ENCODE measurements at regions of chr1 and their contacts with region 1.

Region 1: GRCh38 chr1:29793101-29793546 is 556.8 kb downstream of the PTPRU start:
- DNase-seq: peak; percentile 85 to 89
- H3K4me3 ChIP-seq: no peak overlapping the region
- H3K27ac ChIP-seq: no peak overlapping the region
- H3K4me1 ChIP-seq: no peaks in the 10 kb centered on the region
- H3K27me3 ChIP-seq: peaks cover 0 to 7% of the 10 kb centered on the region in 2 donors
- CTCF ChIP-seq: peak; percentile 70 to 72

Region 2: GRCh38 chr1:29379443-29380073 is 413.6 kb before region 1 on chr1:
- intact Hi-C with region 1: no loop called
- DNase-seq: no peak
- H3K4me3 ChIP-seq: no peak overlapping the region
- H3K27ac ChIP-seq: no peak overlapping the region
- H3K4me1 ChIP-seq: no peaks in the 10 kb centered on the region
- H3K27me3 ChIP-seq: peaks cover 0 to 22% of the 10 kb centered on the region in 2 donors
- CTCF ChIP-seq: no peak

Region 3: GRCh38 chr1:29590583-29591565 is 202.2 kb before region 1 on chr1:
- intact Hi-C with region 1: no loop called
- DNase-seq: no peak
- H3K4me3 ChIP-seq: no peak overlapping the region
- H3K27ac ChIP-seq: no peak overlapping the region
- H3K4me1 ChIP-seq: no peaks in the 10 kb centered on the region
- H3K27me3 ChIP-seq: peaks cover 0 to 29% of the 10 kb centered on the region in 2 donors
- CTCF ChIP-seq: no peak

Region 4: DNA sequence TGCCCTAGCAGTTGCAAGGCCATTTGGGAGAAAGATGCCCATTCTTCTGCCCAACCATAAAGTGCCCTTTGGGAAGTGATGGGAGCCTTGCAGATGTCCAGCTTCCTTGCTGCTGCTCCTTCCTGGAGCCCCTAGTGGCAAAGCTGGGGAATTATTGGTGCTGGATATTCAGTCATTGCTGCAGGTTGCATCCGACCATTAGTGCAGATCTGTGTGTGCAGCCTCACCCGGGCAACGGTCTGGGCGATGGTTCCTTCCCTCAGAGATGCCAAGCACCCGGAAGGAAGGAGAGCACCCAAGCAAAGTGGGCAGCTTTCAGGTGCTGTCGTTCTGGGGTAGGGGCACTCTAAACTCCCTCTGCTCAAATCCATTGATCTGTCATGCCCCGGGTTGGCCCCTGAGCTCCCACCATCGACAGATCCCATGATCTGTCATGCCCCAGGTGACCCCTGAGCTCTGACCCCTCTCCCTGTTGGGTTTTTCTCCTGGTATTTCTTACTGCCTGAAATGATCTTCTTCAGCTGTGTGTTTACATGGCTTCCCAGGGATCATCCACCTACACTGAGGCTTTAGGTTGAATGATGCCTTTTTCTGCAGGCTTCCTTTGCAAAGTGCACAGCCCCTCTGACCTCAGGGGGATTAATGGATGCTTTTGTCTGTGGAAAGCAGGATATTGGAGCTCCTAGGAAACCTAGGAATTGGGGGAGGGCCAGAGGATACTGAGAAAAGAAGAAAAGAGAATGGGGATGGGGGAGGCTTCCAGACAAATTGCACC is 89.3 kb before region 1 on chr1:
- intact Hi-C with region 1: no loop called
- DNase-seq: no peak
- H3K4me3 ChIP-seq: no peak overlapping the region
- H3K27ac ChIP-seq: no peak overlapping the region
- H3K4me1 ChIP-seq: peaks cover 0 to 14% (median 5%) of the 10 kb centered on the region in 4 donors
- H3K27me3 ChIP-seq: peaks cover 0 to 19% of the 10 kb centered on the region in 2 donors
- CTCF ChIP-seq: peak; percentile 52 to 57

Region 5: DNA sequence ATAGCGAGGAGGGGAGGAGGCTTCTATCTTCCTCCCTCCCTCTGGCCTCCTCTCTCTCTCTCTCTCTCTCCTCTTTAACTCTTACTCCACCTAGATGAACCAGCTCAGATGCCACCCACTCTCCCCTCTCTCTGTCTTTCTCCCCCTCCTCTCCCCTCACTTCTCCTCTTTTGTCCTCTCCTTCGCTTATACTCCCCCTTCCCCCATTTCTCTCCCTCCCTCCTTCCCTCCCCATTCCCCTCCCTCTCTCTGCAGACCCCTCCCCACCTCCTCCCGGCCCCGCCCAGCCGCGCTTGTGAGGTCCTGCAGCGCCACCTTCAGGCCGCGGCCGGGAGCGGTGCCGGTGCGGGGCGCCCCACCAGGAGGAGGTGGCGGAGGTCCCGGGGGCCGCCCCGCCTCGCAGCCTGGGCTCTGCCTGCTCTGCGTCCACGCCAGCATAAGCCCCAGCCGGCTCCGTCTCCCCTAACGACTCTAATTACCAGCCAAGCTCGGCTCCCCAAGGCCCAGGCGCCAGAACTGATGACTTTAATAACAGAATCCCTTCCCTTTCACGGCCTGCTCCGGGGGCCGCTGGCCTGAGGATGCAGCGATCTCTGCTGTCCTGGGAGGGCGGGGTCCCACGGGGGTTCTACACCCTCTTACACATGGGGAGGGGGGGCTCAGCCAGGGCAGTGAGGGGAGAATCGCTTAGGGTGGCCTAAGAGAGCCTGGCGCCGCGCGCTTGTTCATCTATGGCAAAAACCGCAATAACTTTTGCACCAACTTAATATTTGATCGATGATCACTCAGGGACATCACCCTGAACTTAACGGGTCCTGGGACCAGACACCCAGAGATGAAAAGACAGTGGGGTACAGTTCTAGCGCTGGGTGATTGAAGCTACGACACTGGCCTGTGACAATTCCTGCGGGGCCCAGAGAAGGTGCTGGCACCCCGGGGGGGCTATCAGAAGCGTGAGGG is 293.0 kb after region 1 on chr1:
- intact Hi-C with region 1: loop called (anchors 5 kb)
- DNase-seq: peak in 1 of 2 donors; percentile 47
- H3K4me3 ChIP-seq: peak overlapping the region; percentile 29 to 44
- H3K27ac ChIP-seq: peak overlapping the region; percentile 74 to 87
- H3K4me1 ChIP-seq: peaks cover 0 to 47% (median 42%) of the 10 kb centered on the region in 4 donors
- H3K27me3 ChIP-seq: peaks cover 0 to 18% of the 10 kb centered on the region in 2 donors
- CTCF ChIP-seq: peak; percentile 79 to 87

Region 6: DNA sequence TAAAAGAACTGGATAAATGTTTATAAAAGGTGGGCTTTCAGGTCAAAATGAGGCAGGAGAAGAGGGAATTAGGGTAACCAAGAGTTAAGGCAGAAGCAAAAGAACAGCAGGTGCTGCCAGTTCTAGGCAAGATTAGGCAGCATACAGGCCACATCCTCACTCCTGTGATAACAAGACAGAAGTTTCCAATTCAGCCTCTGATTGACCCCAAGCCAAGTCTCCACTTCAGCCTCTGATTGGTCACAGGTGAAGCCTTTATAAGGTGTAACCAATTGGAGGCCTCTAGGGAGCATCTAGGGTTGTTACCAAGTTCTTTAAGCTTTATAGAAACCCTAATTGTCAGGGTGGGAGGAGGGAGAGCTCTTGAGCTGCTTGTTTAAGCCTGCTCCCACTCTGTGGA is 769.4 kb after region 1 on chr1:
- intact Hi-C with region 1: no loop called
- DNase-seq: no peak
- H3K4me3 ChIP-seq: no peak overlapping the region
- H3K27ac ChIP-seq: no peak overlapping the region
- H3K4me1 ChIP-seq: no peaks in the 10 kb centered on the region
- H3K27me3 ChIP-seq: no peaks in the 10 kb centered on the region
- CTCF ChIP-seq: no peak